ENCODE measurements at regions of chr12 and their contacts with region 1.

Region 1: GRCh38 chr12:63826006-63826585 is 18.4 kb upstream of the SRGAP1 start:
- DNase-seq: no peak
- ATAC-seq: peak in 6 of 8 donors; percentile 38 to 64 (median 49)
- H3K4me3 ChIP-seq: no peak overlapping the region
- H3K27ac ChIP-seq: no peak overlapping the region
- H3K4me1 ChIP-seq: peaks cover 0 to 6% (median 0%) of the 10 kb centered on the region in 9 donors
- H3K27me3 ChIP-seq: peaks cover 0 to 16% (median 0%) of the 10 kb centered on the region in 7 donors
- CTCF ChIP-seq: peak; percentile 53 to 79 (median 71)

Region 2: DNA sequence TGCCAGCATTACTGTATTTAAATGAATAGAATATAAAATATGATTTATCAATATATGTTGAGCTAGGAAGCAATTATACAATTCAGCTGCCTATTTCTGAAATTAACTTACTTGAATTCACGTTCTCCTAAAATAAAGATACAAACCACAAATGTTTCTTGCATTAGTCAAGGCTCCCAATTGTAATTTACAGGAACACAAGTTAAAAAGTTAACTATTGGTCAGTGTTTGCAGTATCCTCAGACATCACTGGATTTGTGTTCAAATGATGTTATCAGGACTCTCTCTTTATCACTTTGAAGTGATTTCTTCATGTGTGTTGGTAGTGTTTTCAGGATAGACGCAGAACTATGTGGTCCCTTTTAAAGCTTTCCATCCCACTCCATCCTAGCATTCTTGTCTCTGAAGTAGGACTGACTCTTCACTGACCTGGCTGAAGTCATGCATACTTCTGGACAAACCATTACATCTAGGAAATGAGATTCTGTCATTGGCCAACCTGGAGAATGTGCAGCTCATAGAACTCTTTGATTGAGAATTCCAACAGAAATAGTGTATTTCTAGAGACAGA is 239.9 kb after region 1 on chr12:
- intact Hi-C with region 1: no loop called
- DNase-seq: no peak
- ATAC-seq: no peak
- H3K4me3 ChIP-seq: no peak overlapping the region
- H3K27ac ChIP-seq: no peak overlapping the region
- H3K4me1 ChIP-seq: peaks cover 0 to 10% (median 5%) of the 10 kb centered on the region in 9 donors
- H3K27me3 ChIP-seq: no peaks in the 10 kb centered on the region
- CTCF ChIP-seq: no peak

Region 3: GRCh38 chr12:64385468-64385867 is 559.4 kb after region 1 on chr12:
- intact Hi-C with region 1: loop called in 2 of 10 experiments (anchors 10 kb)
- DNase-seq: no peak
- ATAC-seq: no peak
- H3K4me3 ChIP-seq: no peak overlapping the region
- H3K27ac ChIP-seq: no peak overlapping the region
- H3K4me1 ChIP-seq: peaks cover 0 to 7% (median 5%) of the 10 kb centered on the region in 9 donors
- H3K27me3 ChIP-seq: peaks cover 0 to 16% (median 11%) of the 10 kb centered on the region in 7 donors
- CTCF ChIP-seq: no peak

Measured in heart right ventricle (tissue), 16 donors.